Activated CD4-positive, alpha-beta T cell treated with anti-CD3 and anti-CD28 coated beads, Interleukin-2, amount 10 ng/mL, durations not matched to agents 7 days and 5 days (primary cell): ENCODE measurements at regions of chr17 and their contacts with region 1.

Region 1: GRCh38 chr17:67376737-67377487 is at the start of gene PITPNC1:
- DNase-seq: peak; percentile 90
- H3K4me3 Mint-ChIP-seq: peak within 1 kb of the TSS; percentile 85
- H3K27ac Mint-ChIP-seq: peak within 1 kb of the TSS; percentile 92
- H3K4me1 Mint-ChIP-seq: peaks cover 43% of the 10 kb centered on the region
- H3K27me3 Mint-ChIP-seq: no peaks in the 10 kb centered on the region
- total RNA-seq, gene PITPNC1: 57.0 to 67.1 TPM

Region 2: GRCh38 chr17:67366193-67367157 is 10.4 kb before region 1 on chr17 and contains the start of gene PSMD12:
- CTCF ChIA-PET with region 1: interaction called, 19 read pairs
- POLR2A ChIA-PET with region 1: interaction called, 7 read pairs
- DNase-seq: peak; percentile 92
- H3K4me3 Mint-ChIP-seq: peak within 1 kb of the TSS; percentile 93
- H3K27ac Mint-ChIP-seq: peak within 1 kb of the TSS; percentile 86
- H3K4me1 Mint-ChIP-seq: peaks cover 60% of the 10 kb centered on the region
- H3K27me3 Mint-ChIP-seq: no peaks in the 10 kb centered on the region
- total RNA-seq, gene PSMD12: 42.4 to 47.5 TPM

Region 3: GRCh38 chr17:67390646-67391384 is 13.9 kb after region 1 on chr17:
- CTCF ChIA-PET with region 1: interaction called, 38 read pairs
- POLR2A ChIA-PET with region 1: interaction called, 3 read pairs
- DNase-seq: peak; percentile 75
- H3K4me3 Mint-ChIP-seq: peak overlapping the region; percentile 68
- H3K27ac Mint-ChIP-seq: peak overlapping the region; percentile 94
- H3K4me1 Mint-ChIP-seq: peaks cover 65% of the 10 kb centered on the region
- H3K27me3 Mint-ChIP-seq: no peaks in the 10 kb centered on the region

Region 4: DNA sequence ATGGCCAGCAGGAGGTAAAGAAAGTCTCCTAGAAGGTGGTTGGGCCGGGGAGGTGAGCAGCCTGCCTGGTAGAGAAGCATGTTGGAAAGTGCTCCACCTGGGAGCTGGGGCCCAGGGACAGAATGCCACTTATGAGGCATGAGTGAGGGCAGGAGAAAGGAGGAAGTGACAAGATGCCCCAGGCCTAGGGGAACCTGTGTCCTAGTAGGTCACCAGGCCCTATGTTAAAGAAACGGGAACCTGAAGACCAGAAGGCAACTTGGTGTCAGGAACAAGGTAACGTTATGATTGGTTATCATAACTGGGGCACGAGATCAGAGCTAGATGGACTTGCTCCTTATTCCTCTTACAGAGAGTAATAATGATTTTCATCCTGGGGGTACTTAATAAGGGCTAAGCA is 34.5 kb after region 1 on chr17:
- CTCF ChIA-PET with region 1: no interaction called
- POLR2A ChIA-PET with region 1: no interaction called
- DNase-seq: no peak
- H3K4me3 Mint-ChIP-seq: no peak overlapping the region
- H3K27ac Mint-ChIP-seq: no peak overlapping the region
- H3K4me1 Mint-ChIP-seq: peaks cover 28% of the 10 kb centered on the region
- H3K27me3 Mint-ChIP-seq: no peaks in the 10 kb centered on the region

Region 5: GRCh38 chr17:67469208-67469895 is 92.4 kb after region 1 on chr17:
- CTCF ChIA-PET with region 1: interaction called, 55 read pairs
- POLR2A ChIA-PET with region 1: no interaction called
- DNase-seq: no peak
- H3K4me3 Mint-ChIP-seq: peak overlapping the region; percentile 4
- H3K27ac Mint-ChIP-seq: peak overlapping the region; percentile 86
- H3K4me1 Mint-ChIP-seq: peaks cover 61% of the 10 kb centered on the region
- H3K27me3 Mint-ChIP-seq: no peaks in the 10 kb centered on the region